ENCODE measurements at regions of chr7 and their contacts with region 1.

Region 1: DNA sequence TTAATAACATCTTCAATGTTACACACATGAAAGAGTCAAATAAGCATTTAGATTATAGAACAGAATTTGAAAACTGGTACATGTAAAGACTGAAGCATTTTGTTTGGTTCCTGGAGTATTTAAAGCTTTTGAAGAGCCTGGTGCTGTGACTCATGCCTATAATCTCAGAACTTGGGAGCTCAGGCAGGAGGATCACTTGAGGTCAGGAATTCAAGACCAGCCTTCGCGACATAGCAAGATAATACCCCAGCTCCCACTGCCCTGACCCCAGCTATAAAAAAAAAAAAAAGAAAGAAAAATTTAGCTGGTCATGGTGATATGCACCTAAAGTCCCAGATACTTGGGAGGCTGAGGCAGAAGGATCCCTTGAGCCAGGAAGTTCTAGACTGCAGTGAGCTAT is 87.8 kb downstream of the HDAC9 start:
- DNase-seq: no peak
- H3K4me3 ChIP-seq: no peak overlapping the region
- CTCF ChIP-seq: no peak

Region 2: GRCh38 chr7:18361756-18362155 is 221.5 kb before region 1 on chr7:
- in situ Hi-C with region 1: loop called (anchors 10 kb)
- DNase-seq: peak; percentile 4
- H3K4me3 ChIP-seq: no peak overlapping the region
- CTCF ChIP-seq: peak; percentile 9

Region 3: GRCh38 chr7:19224951-19225350 is 641.6 kb after region 1 on chr7:
- in situ Hi-C with region 1: no loop called
- DNase-seq: no peak
- H3K4me3 ChIP-seq: no peak overlapping the region
- CTCF ChIP-seq: no peak

Measured in astrocyte of the cerebellum (primary cell).